ENCODE measurements at regions of chr16 and their contacts with region 1.

Region 1: DNA sequence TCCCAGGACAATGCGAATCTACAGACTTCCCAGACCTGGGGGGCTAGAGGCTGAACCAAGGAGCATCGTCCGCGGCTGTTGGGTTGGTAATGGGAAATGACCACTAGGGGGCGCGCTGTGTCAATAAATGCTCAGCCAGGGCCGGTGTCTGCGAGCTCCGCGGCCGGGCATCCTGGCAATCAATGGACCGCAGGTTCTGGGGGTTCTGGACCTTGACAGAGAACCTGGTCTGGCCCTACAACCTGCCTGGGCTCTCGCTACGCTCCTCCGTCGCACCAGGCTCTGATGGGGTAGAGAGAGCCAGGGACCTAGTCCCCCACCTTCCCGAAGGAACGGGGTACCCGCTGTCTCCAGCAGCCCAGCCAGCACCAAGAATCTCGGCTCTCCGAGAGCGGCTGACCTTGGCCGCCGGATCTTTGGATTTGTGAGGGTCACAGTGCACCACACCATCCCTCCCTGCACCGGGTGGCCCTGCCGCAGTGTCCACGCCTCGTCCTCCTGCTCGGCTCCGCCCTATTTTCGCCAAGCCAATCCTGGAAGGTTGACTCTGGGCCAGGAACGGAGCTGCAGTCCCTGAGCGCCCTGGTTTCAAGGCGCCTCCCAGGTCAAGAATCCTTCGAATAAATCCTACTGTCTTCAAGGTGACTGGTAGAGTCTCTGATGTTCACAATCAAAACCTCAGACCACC is 20.4 kb upstream of the BEAN1 start:
- DNase-seq: peak; percentile 92
- H3K4me3 Mint-ChIP-seq: peak overlapping the region; percentile 80
- H3K27ac Mint-ChIP-seq: no peak overlapping the region
- H3K4me1 Mint-ChIP-seq: peaks cover 24% of the 10 kb centered on the region
- H3K27me3 Mint-ChIP-seq: peaks cover 2% of the 10 kb centered on the region

Region 2: GRCh38 chr16:66455970-66456369 is 49.3 kb after region 1 on chr16:
- CTCF ChIA-PET with region 1: interaction called, 12 read pairs
- POLR2A ChIA-PET with region 1: interaction called, 3 read pairs
- intact Hi-C with region 1: no loop called
- DNase-seq: no peak
- H3K4me3 Mint-ChIP-seq: no peak overlapping the region
- H3K27ac Mint-ChIP-seq: no peak overlapping the region
- H3K4me1 Mint-ChIP-seq: no peaks in the 10 kb centered on the region
- H3K27me3 Mint-ChIP-seq: peaks cover 7% of the 10 kb centered on the region

Region 3: DNA sequence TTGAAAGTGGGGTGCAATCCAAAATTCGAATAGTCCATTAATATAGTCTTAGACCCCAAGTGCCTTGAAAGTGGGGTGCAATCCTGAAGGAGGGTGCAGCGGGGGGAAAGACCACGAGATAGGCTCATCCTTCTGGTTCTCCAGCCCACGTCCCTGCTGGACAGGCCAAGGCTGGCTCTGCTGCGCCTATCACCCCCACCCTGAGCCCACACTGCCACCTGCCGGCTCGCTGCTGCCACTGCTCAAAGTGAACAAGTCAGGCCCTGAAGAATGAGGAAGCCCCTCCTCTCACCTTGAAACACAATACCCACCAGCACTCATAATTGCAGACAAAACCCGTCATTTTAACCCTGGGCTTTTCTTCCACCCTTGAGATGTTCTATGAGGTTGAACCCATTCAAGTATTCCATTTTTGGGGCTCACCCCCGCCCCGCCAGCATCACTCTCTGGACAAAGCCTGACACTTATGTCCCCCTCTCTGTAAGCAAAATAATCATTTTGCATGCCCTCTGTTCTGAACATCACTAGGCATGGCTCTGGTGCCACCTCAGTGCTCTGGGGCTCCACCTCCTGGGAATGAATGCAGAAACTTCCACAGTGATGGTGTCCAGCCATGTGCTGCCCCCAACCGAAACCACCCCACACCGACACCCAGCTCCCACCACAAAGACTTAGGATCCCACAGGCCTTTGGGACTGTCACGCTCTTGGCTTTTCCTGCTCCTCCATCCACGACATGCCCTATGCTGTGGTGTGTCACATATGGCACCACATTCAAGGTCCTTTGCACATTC is 77.2 kb after region 1 on chr16:
- CTCF ChIA-PET with region 1: interaction called, 77 read pairs
- POLR2A ChIA-PET with region 1: no interaction called
- intact Hi-C with region 1: loop called (anchors 1 kb)
- DNase-seq: peak; percentile 85
- H3K4me3 Mint-ChIP-seq: no peak overlapping the region
- H3K27ac Mint-ChIP-seq: peak overlapping the region; percentile 79
- H3K4me1 Mint-ChIP-seq: peaks cover 19% of the 10 kb centered on the region
- H3K27me3 Mint-ChIP-seq: no peaks in the 10 kb centered on the region

Region 4: GRCh38 chr16:66562407-66562806 is 155.7 kb after region 1 on chr16:
- CTCF ChIA-PET with region 1: interaction called, 10 read pairs
- POLR2A ChIA-PET with region 1: interaction called, 4 read pairs
- intact Hi-C with region 1: no loop called
- DNase-seq: no peak
- H3K4me3 Mint-ChIP-seq: no peak overlapping the region
- H3K27ac Mint-ChIP-seq: no peak overlapping the region
- H3K4me1 Mint-ChIP-seq: peaks cover 71% of the 10 kb centered on the region
- H3K27me3 Mint-ChIP-seq: no peaks in the 10 kb centered on the region

Region 5: DNA sequence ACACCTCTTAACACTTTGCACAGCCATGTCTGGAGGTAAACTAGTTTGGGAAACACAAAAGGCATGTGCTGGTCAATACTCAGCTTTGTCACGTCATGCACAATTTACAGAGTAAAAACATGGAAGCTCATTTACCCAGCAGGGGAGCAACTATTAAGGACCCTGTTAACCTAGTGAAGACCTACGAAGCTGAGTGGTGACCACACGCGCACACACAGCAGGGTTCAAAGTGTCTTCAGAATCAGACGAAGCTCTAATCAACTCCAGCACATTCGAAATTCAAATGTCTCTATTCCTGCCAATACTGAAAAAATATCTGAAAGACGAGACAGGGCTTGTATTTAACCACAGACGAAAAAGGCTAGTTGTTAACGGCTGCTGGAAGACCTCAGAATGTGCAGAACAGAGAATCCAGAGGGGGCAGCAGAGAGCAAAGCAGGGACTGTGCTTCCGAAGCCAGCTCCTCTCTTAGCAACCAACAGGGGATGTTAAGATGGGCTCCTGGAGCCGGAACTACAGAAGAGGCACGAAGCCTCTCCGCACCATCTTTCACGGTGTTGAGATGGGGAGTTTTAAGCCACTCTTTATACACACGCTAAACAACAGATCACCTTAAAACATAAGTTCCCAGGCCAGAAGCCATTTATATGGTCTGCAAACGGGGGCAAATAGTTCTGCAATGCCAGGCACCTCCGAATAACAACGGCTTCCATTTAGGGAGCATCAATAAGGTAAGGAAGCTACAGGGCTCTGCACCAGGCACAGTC is 244.2 kb after region 1 on chr16:
- CTCF ChIA-PET with region 1: interaction called, 13 read pairs
- POLR2A ChIA-PET with region 1: no interaction called
- intact Hi-C with region 1: loop called (anchors 1 kb)
- DNase-seq: peak; percentile 86
- H3K4me3 Mint-ChIP-seq: peak overlapping the region; percentile 58
- H3K27ac Mint-ChIP-seq: no peak overlapping the region
- H3K4me1 Mint-ChIP-seq: peaks cover 10% of the 10 kb centered on the region
- H3K27me3 Mint-ChIP-seq: peaks cover 5% of the 10 kb centered on the region

Region 6: DNA sequence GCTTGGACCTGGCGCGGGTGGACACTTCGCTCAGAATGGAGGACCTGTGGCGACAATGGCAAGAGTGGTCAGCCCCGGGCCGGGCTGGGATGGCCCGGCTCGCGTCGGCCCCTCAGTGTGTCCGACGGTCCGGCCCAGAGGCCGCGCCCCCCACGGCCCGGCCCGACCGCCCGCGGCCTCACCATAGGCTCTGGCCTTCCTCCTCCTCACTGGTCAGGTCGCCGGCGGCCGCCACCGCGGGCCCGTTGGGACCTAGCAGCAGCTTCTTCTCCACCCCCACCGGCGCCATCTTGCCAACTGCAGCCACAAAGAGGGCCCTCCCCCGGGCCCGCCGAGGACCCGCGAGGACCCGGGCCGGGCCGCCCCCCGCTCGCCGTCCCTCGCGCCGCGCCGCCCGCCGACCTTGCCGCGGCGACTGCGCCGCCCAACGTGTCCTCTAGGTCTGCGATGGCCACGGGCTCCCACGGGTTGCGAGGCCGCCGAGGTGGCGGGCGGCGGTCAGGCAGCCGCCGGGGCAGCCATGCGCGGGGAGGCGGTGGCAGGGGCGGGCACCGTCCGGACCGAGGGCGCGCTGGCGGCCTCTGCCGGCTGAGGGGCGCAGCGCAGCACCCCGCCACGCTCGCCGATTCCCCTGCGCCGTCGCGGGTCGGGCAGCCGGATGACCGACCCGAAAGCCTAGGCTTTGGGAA is 344.8 kb after region 1 on chr16 and contains the start of gene DYNC1LI2:
- CTCF ChIA-PET with region 1: interaction called, 11 read pairs
- POLR2A ChIA-PET with region 1: no interaction called
- intact Hi-C with region 1: no loop called
- DNase-seq: peak; percentile 84
- H3K4me3 Mint-ChIP-seq: peak within 1 kb of the TSS; percentile 83
- H3K27ac Mint-ChIP-seq: peak within 1 kb of the TSS; percentile 74
- H3K4me1 Mint-ChIP-seq: peaks cover 37% of the 10 kb centered on the region
- H3K27me3 Mint-ChIP-seq: peaks cover 4% of the 10 kb centered on the region
- total RNA-seq, gene DYNC1LI2: 37.9 to 39.1 TPM